Cardiac septum (tissue), 1 donor: ENCODE measurements at regions of chrX and their contacts with region 1.

Region 1: GRCh38 chrX:41333744-41334259 is at the start of gene DDX3X:
- DNase-seq: peak; percentile 95
- total RNA-seq, gene DDX3X: 214 TPM

Region 2: DNA sequence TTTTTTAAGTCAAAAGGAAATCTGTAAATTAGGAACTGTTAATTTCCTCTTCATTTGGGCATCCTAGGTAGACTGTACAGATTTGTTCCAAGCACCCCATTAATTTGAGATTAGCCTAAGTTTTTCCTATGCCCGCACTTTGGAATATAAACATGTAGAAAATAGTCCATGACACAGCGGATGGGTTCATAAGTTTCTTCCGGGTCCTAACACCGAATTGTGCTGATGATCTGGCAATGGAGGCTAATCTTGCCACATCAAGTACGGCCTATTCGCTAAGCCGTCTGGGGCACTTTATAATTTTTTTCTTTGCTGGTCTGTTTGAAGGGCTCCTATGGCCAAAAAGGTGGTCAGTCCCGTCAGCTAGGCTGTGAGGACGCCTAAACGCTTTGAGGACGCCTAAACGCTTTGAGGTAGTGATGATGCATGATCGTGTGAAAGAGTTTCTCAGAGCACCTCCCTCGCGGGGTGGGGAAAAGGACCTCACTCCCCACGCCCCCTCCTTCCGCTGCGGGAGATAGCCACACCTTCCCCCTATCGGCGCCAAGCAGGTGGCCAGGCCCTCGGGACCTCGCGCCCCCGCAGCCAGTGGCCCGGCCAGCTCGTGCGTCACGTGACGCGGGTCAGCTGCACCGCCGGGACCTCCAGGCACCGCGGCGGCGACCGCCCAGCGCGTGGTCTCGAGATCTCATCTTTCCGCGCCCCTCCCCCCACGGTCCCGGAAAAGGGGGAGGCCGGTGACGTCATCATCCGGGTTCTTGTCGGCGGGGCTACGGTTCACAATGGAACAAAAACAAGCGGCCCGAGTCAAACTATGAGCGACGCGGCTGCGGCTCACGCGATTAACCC is 249.5 kb before region 1 on chrX:
- intact Hi-C with region 1: loop called (anchors 2 kb)
- DNase-seq: peak; percentile 98

Region 3: GRCh38 chrX:41441934-41442823 is 108.4 kb after region 1 on chrX:
- intact Hi-C with region 1: loop called (anchors 2 kb)
- DNase-seq: peak; percentile 95

Region 4: DNA sequence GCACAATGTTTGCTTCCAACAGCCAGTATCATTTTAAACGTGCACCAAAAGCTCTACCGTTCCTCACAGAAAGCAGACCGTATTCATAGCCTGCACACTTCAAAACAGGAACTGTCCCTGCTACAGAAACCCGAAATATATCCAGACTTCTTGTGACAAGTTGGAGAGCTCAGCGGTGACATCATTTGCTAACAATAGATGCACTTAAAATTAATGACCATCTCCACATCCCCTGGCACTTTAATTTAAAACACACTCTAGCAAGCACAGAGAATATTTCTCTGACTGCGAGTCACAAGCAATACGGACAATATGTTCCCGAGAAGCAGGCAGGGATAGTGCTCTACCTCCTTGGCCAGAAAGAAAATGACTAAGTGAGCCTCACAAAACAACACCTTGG is 115.8 kb after region 1 on chrX:
- intact Hi-C with region 1: loop called (anchors 2 kb)
- DNase-seq: no peak